Panc1 (cell line): ENCODE measurements at regions of chr14 and their contacts with region 1.

Region 1: GRCh38 chr14:55265197-55265596 is 6.0 kb upstream of the FBXO34 start:
- DNase-seq: no peak
- ATAC-seq: no peak
- H3K4me3 ChIP-seq: no peak overlapping the region
- H3K27ac ChIP-seq: no peak overlapping the region
- H3K4me1 ChIP-seq: peaks cover 8% of the 10 kb centered on the region; the same call in 1 of the 2 replicates
- H3K27me3 ChIP-seq: no peaks in the 10 kb centered on the region
- CTCF ChIP-seq: no peak

Region 2: GRCh38 chr14:55297611-55298441 is 32.6 kb after region 1 on chr14:
- CTCF ChIA-PET with region 1: no interaction called
- POLR2A ChIA-PET with region 1: interaction called, 14 read pairs
- in situ Hi-C with region 1: no loop called
- intact Hi-C with region 1: no loop called
- DNase-seq: no peak
- ATAC-seq: no peak
- H3K4me3 ChIP-seq: no peak overlapping the region
- H3K27ac ChIP-seq: no peak overlapping the region
- H3K4me1 ChIP-seq: peaks cover 13% of the 10 kb centered on the region
- H3K27me3 ChIP-seq: no peaks in the 10 kb centered on the region
- CTCF ChIP-seq: peak; percentile 5; the same call in 1 of the 2 replicates

Region 3: GRCh38 chr14:56491299-56492285 is 1226.4 kb after region 1 on chr14:
- CTCF ChIA-PET with region 1: no interaction called
- POLR2A ChIA-PET with region 1: no interaction called
- in situ Hi-C with region 1: no loop called
- intact Hi-C with region 1: no loop called
- DNase-seq: peak; percentile 35
- ATAC-seq: 0 out of 2 replicates have a peak, but pooled peaks have one; percentile 63
- H3K4me3 ChIP-seq: no peak overlapping the region
- H3K27ac ChIP-seq: no peak overlapping the region
- H3K4me1 ChIP-seq: no peaks in the 10 kb centered on the region
- H3K27me3 ChIP-seq: no peaks in the 10 kb centered on the region
- CTCF ChIP-seq: peak; percentile 74